ENCODE measurements at regions of chr16 and their contacts with region 1.

Region 1: GRCh38 chr16:58025351-58026138 is at the start of gene MMP15:
- DNase-seq: peak; percentile 69
- total RNA-seq, gene MMP15: 3.1 and 3.9 TPM in 2 replicates

Region 2: GRCh38 chr16:57966133-57966805 is 59.3 kb before region 1 on chr16:
- in situ Hi-C with region 1: no loop called
- DNase-seq: peak; percentile 2

Region 3: GRCh38 chr16:58110571-58111301 is 85.2 kb after region 1 on chr16:
- in situ Hi-C with region 1: no loop called
- DNase-seq: no peak

Region 4: GRCh38 chr16:58129097-58129936 is 103.8 kb after region 1 on chr16 and contains the start of gene CFAP20:
- in situ Hi-C with region 1: loop called (anchors 10 kb)
- DNase-seq: peak; percentile 99
- total RNA-seq, gene CFAP20: 70.7 and 89.6 TPM in 2 replicates